Common myeloid progenitor, CD34-positive (primary cell): ENCODE measurements at regions of chr6 and their contacts with region 1.

Region 1: DNA sequence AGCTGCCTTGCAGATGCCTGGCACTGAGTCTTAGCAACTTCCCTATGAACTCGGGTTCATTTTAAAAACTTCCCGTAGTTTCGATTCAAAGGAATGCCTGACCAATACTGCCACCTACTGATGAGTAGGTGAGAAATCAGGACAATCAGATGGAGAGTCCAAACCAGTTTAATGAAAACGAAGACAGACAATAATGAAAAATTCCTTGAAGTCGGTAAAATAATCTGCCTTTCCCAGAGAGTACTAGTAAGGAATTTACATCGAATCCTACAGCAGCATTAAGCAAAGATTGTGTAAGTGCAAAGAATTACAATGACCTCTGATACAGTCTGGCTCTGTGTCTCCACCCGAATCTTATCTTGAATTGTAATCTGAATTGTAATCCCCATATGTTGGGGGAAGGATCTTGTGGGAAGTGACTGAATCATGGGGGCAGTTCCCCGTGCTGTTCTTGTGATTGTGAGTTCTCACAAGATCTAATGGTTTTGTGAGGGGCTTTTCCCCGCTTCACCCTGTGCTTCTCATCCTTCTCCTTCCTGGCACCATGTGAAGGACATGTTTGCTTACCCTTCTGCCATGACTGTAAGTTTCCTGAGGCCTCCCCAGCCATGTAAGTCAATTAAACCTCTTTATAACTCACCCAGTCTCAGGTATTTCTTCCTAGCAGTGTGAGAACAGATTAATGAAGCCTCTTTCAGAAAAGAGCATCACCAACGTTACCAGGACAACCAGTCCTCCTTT is 134.4 kb downstream of the ARHGAP18 start:
- DNase-seq: peak; percentile 54 to 74 (median 74)
- H3K4me3 ChIP-seq: peak overlapping the region in 2 of 7 experiments; percentile 29 to 68
- H3K27ac ChIP-seq: no peak overlapping the region
- H3K4me1 ChIP-seq: no peaks in the 10 kb centered on the region
- H3K27me3 ChIP-seq: no peaks in the 10 kb centered on the region

Region 2: GRCh38 chr6:128456510-128457230 is 1118.9 kb before region 1 on chr6:
- CTCF ChIA-PET with region 1: no interaction called
- POLR2A ChIA-PET with region 1: no interaction called
- DNase-seq: no peak
- H3K4me3 ChIP-seq: no peak overlapping the region
- H3K27ac ChIP-seq: no peak overlapping the region
- H3K4me1 ChIP-seq: no peaks in the 10 kb centered on the region
- H3K27me3 ChIP-seq: no peaks in the 10 kb centered on the region

Region 3: DNA sequence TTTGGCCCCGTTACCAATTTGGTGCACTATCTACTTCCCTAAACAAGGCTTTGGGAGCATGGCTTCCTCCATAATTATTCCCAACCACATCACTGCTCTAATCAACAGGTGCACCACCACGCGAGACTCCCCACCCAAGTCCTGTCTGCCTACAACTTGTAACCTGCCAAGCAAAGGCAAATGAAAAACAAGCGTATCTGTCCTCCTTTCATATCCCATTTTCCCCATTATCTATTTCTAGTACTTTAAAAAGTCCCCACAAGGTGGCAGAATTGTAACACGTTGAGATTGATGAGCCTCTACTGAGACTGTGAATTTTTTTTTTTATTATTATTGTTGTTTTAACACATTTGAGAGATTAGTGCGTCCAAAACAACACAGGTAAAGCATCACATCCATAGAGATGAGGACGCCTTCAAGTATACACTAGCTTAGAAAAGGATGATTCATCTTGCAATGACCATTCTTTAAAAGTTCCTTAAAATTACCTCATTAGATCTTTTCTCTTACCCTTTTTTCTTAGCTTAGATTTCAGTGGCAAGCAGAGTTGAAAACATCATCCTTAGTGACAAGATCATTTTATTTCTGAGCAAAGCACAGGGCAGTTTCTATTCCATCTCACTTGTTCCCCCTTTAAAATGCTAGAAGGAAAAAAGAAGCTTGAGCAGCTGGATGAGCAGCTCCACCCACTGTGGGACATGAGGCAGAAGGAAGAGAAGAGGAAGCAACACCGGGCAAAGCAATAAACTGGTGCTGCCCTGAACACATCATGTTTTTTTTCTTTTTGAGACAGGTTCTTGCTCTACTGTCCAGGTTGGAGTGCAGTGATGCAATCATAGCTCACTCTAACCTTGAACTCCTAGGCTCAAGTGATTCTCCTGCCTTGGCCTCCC is 76.4 kb before region 1 on chr6:
- CTCF ChIA-PET with region 1: interaction called, 73 read pairs
- POLR2A ChIA-PET with region 1: no interaction called
- DNase-seq: peak; percentile 57 to 70 (median 62)
- H3K4me3 ChIP-seq: peak overlapping the region in 1 of 7 experiments; percentile 63
- H3K27ac ChIP-seq: no peak overlapping the region
- H3K4me1 ChIP-seq: peaks cover 3 to 23% (median 14%) of the 10 kb centered on the region in 4 experiments
- H3K27me3 ChIP-seq: peaks cover 0 to 6% (median 0%) of the 10 kb centered on the region in 5 experiments

Region 4: GRCh38 chr6:129565366-129565765 is 10.2 kb before region 1 on chr6:
- CTCF ChIA-PET with region 1: interaction called, 13 read pairs
- POLR2A ChIA-PET with region 1: no interaction called
- DNase-seq: no peak
- H3K4me3 ChIP-seq: no peak overlapping the region
- H3K27ac ChIP-seq: no peak overlapping the region
- H3K4me1 ChIP-seq: no peaks in the 10 kb centered on the region
- H3K27me3 ChIP-seq: peaks cover 0 to 2% (median 0%) of the 10 kb centered on the region in 5 experiments

Region 5: GRCh38 chr6:129860908-129861665 is 285.5 kb after region 1 on chr6 and contains the start of gene TMEM244:
- CTCF ChIA-PET with region 1: no interaction called
- POLR2A ChIA-PET with region 1: no interaction called
- DNase-seq: no peak
- H3K4me3 ChIP-seq: peak within 1 kb of the TSS in 1 of 7 experiments; percentile 17
- H3K27ac ChIP-seq: no peak within 1 kb of the TSS
- H3K4me1 ChIP-seq: no peaks in the 10 kb centered on the region
- H3K27me3 ChIP-seq: no peaks in the 10 kb centered on the region